T-cell (primary cell): ENCODE measurements at regions of chr6 and their contacts with region 1.

Region 1: GRCh38 chr6:144094731-144095330 is 542 bp downstream of the SF3B5 start:
- DNase-seq: peak in 5 of 35 experiments; percentile 0 to 4 (median 3)
- ATAC-seq: no peak
- H3K4me3 ChIP-seq: peak overlapping the region; percentile 69 to 95
- H3K4me3 Mint-ChIP-seq: peak overlapping the region; percentile 95 to 99 (median 98)
- H3K27ac ChIP-seq: peak overlapping the region; percentile 92
- H3K27ac Mint-ChIP-seq: peak overlapping the region; percentile 95 to 97
- H3K4me1 ChIP-seq: peaks cover 12 to 25% of the 10 kb centered on the region in 2 experiments
- H3K4me1 Mint-ChIP-seq: peaks cover 23 to 34% (median 28%) of the 10 kb centered on the region in 3 donors
- H3K27me3 ChIP-seq: no peaks in the 10 kb centered on the region
- H3K27me3 Mint-ChIP-seq: no peaks in the 10 kb centered on the region

Region 2: GRCh38 chr6:144423167-144423566 is 328.3 kb after region 1 on chr6:
- CTCF ChIA-PET with region 1: no interaction called
- POLR2A ChIA-PET with region 1: no interaction called
- DNase-seq: no peak
- ATAC-seq: no peak
- H3K4me3 ChIP-seq: no peak overlapping the region
- H3K4me3 Mint-ChIP-seq: no peak overlapping the region
- H3K27ac ChIP-seq: no peak overlapping the region
- H3K27ac Mint-ChIP-seq: peak overlapping the region in 1 of 2 donors; percentile 44
- H3K4me1 ChIP-seq: peaks cover 0 to 7% of the 10 kb centered on the region in 2 experiments
- H3K4me1 Mint-ChIP-seq: peaks cover 25 to 37% (median 28%) of the 10 kb centered on the region in 3 donors
- H3K27me3 ChIP-seq: no peaks in the 10 kb centered on the region
- H3K27me3 Mint-ChIP-seq: no peaks in the 10 kb centered on the region

Region 3: GRCh38 chr6:144855375-144855774 is 760.5 kb after region 1 on chr6:
- CTCF ChIA-PET with region 1: interaction called in 1 of 2 experiments, 11 read pairs
- POLR2A ChIA-PET with region 1: no interaction called
- DNase-seq: no peak
- ATAC-seq: no peak
- H3K4me3 ChIP-seq: no peak overlapping the region
- H3K4me3 Mint-ChIP-seq: no peak overlapping the region
- H3K27ac ChIP-seq: no peak overlapping the region
- H3K27ac Mint-ChIP-seq: peak overlapping the region in 1 of 2 donors; percentile 25
- H3K4me1 ChIP-seq: no peaks in the 10 kb centered on the region
- H3K4me1 Mint-ChIP-seq: peaks cover 0 to 2% (median 0%) of the 10 kb centered on the region in 3 donors
- H3K27me3 ChIP-seq: no peaks in the 10 kb centered on the region
- H3K27me3 Mint-ChIP-seq: peaks cover 0 to 6% of the 10 kb centered on the region in 2 donors